ENCODE measurements at regions of chr5 and their contacts with region 1.

Region 1: DNA sequence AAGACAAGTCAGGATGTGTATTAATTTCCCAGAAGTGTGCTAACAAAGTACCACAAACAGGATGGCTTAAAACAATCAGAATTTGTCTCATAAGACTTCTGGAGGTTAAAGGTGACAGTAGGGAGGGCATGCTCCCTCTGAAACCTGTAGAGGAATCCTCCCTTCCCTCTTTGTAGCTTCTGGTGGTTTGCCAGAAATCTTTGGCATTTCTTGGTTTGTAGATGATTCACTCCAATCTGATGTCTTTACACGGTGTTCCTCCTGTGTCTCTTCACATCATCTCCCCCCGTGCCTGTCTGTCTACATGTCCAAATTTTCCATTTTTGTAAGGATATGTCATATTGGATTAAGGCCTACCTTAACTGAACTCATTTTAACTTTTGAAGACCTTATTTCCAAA is 471.5 kb downstream of the ZNF608 start:
- DNase-seq: no peak
- H3K4me3 ChIP-seq: no peak overlapping the region
- H3K4me3 Mint-ChIP-seq: no peak overlapping the region
- H3K27ac Mint-ChIP-seq: no peak overlapping the region
- H3K4me1 ChIP-seq: peaks cover 23% of the 10 kb centered on the region
- H3K4me1 Mint-ChIP-seq: peaks cover 7% of the 10 kb centered on the region
- H3K27me3 ChIP-seq: no peaks in the 10 kb centered on the region
- H3K27me3 Mint-ChIP-seq: no peaks in the 10 kb centered on the region
- CTCF ChIP-seq: no peak

Region 2: DNA sequence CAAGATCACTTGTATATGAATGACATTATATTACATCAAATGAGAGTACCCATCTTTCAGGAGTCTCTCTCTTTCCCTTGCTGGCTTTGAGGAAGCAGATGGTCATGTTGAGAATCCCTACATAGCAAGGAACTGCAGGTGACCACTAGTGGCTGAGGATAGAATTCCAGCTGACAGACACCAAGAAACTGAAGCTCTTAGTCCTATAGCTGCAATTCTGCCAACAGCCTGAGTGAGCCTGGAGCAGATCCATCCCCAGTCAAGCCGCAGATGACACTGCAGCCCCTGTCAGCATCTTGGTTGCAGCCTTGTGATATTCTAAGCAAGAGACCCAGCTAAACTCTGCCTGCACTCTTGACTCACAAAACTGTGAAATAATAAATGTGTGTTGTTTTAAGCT is 231.5 kb before region 1 on chr5:
- CTCF ChIA-PET with region 1: no interaction called
- POLR2A ChIA-PET with region 1: no interaction called
- intact Hi-C with region 1: loop called (anchors 5 kb)
- DNase-seq: peak; percentile 70 to 73
- H3K4me3 ChIP-seq: no peak overlapping the region
- H3K4me3 Mint-ChIP-seq: no peak overlapping the region
- H3K27ac Mint-ChIP-seq: no peak overlapping the region
- H3K4me1 ChIP-seq: no peaks in the 10 kb centered on the region
- H3K4me1 Mint-ChIP-seq: no peaks in the 10 kb centered on the region
- H3K27me3 ChIP-seq: no peaks in the 10 kb centered on the region
- H3K27me3 Mint-ChIP-seq: no peaks in the 10 kb centered on the region
- CTCF ChIP-seq: peak; percentile 45 to 85

Region 3: DNA sequence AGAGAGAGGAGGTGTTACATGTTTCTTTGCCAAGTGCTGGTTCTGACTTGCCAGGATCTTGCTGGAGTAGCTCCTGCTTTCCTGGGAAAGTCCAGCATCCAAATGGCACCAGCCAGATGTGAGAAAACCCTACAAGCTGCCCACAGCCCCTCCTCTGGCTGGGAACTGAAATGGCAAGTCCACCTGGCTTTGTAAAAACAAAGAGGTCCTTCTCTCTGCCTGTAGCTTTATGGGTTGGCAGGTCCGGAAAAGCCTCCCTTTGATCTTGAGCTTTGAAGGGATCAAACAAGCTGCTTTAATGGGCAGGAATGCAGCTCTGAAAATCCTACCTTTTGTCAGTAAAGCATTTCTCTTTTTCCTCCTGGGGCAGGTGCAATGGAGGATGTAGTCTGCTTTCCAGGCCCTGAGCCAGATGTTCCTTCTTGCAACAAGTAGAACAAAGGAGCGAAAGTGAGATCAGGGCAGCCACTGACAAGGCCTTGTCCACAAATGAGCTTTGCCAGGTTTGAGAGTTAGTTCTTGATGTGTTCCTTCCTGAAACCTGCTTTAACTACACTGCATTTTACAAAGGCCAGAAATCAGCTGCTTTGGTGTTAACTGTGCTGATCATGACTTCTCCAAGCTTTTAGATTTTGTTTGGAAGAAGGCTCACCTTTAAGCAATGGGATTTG is 14.8 kb after region 1 on chr5:
- CTCF ChIA-PET with region 1: no interaction called
- POLR2A ChIA-PET with region 1: no interaction called
- intact Hi-C with region 1: no loop called
- DNase-seq: peak; percentile 76 to 78
- H3K4me3 ChIP-seq: no peak overlapping the region
- H3K4me3 Mint-ChIP-seq: no peak overlapping the region
- H3K27ac Mint-ChIP-seq: peak overlapping the region; percentile 13
- H3K4me1 ChIP-seq: peaks cover 21% of the 10 kb centered on the region; the same call in 1 of the 2 replicates
- H3K4me1 Mint-ChIP-seq: peaks cover 18% of the 10 kb centered on the region
- H3K27me3 ChIP-seq: no peaks in the 10 kb centered on the region
- H3K27me3 Mint-ChIP-seq: no peaks in the 10 kb centered on the region
- CTCF ChIP-seq: peak; percentile 20 to 42